ENCODE measurements at regions of chr3 and their contacts with region 1.

Region 1: DNA sequence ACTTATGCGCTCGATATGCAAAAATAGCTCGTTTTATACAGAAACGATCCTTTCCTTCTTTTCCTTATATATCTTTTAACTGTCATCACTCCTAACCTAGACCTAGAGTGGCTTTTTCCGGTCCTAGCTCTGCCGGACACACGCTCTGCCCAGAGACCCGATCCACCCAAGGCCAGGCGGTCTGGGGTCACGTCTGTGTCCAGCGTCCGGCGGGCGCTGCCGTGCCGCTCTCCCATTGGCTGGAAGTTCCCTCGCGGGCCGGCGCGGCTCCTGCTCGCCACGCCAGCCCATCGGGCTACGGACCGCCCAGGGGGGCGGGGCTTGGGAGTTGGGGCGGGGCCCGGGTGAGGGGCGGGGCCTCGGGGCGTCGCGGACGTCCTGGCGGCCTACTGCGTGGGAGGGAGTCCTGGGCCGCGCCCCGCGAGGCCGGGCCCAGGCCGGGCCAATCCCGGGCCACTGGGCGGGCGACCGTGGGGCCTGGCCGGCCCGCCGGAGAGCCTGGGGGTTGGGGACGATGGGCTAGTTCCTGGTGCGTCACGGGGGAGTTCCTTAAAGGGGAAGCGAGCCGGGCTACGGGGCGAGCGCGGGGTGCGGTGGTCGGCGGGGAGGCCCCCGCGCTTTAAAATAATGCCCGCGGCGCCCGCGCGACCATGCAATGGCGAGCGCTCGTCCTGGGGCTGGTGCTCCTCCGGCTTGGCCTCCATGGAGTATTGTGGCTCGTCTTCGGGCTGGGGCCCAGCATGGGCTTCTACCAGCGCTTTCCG is at the start of gene EDEM1:
- DNase-seq: peak; percentile 96
- ATAC-seq: peak; percentile 88
- H3K4me3 ChIP-seq: peak within 1 kb of the TSS; percentile 91 to 99 (median 94)
- H3K4me3 Mint-ChIP-seq: peak within 1 kb of the TSS; percentile 99
- H3K27ac ChIP-seq: peak within 1 kb of the TSS; percentile 94 to 96
- H3K27ac Mint-ChIP-seq: peak within 1 kb of the TSS; percentile 99
- H3K4me1 ChIP-seq: peaks cover 69 to 75% of the 10 kb centered on the region in 2 donors
- H3K4me1 Mint-ChIP-seq: peaks cover 69% of the 10 kb centered on the region
- H3K27me3 ChIP-seq: no peaks in the 10 kb centered on the region
- H3K27me3 Mint-ChIP-seq: no peaks in the 10 kb centered on the region
- CTCF ChIP-seq: no peak
- total RNA-seq, gene EDEM1: 167 and 177 TPM in 2 replicates

Region 2: DNA sequence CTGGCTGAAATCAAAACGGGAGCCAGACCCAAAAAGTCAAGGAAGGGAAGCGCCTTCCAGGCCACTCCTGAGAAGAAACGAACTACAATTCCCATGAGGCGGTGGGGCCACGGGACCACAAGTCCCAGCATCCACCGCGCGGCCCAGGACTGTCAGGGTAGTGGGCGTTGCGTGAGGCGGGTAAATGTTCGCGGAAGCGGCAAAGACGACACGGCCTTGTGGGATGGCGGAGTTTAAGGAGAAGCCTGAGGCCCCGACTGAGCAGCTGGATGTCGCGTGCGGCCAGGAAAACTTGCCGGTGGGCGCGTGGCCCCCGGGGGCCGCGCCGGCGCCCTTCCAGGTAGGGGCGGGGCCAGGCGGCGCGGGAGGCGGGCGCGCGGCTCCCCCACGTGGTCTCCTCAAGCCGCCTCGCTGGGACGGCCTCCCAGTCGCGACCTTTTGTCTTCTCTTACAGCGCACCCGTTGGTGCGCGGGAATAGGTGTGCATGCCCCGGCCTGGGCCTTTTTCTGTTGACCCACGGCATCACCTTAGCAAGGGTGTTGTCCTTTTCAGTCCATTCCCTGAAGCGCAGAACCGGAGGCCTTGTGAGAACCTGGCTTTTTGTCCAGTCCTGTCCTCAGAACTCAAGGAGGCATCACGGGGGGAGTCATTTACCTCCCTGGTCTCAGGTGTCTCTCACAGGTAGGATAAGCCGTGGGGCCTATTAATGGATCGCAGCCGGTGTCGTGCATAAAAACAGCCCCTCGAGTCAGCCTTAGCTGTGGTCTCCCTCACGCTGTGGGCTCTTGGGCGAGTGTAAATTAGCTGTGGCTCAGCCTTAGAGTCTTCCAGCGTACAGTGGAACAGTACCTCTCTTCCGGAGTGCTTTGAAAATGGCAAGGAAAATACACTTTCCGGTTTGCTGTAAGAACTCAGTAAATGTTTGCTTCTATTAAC is 883.9 kb before region 1 on chr3 and contains the start of gene SETMAR:
- CTCF ChIA-PET with region 1: no interaction called
- POLR2A ChIA-PET with region 1: no interaction called
- intact Hi-C with region 1: loop called (anchors 5 kb)
- DNase-seq: peak; percentile 91
- ATAC-seq: peak; percentile 94
- H3K4me3 ChIP-seq: peak within 1 kb of the TSS; percentile 62 to 88 (median 85)
- H3K4me3 Mint-ChIP-seq: peak within 1 kb of the TSS; percentile 100
- H3K27ac ChIP-seq: peak within 1 kb of the TSS; percentile 64 to 79
- H3K27ac Mint-ChIP-seq: peak within 1 kb of the TSS; percentile 99
- H3K4me1 ChIP-seq: peaks cover 0 to 12% of the 10 kb centered on the region in 2 donors
- H3K4me1 Mint-ChIP-seq: peaks cover 16% of the 10 kb centered on the region
- H3K27me3 ChIP-seq: no peaks in the 10 kb centered on the region
- H3K27me3 Mint-ChIP-seq: no peaks in the 10 kb centered on the region
- CTCF ChIP-seq: no peak
- total RNA-seq, gene SETMAR: 6.8 and 7.6 TPM in 2 replicates

Region 3: DNA sequence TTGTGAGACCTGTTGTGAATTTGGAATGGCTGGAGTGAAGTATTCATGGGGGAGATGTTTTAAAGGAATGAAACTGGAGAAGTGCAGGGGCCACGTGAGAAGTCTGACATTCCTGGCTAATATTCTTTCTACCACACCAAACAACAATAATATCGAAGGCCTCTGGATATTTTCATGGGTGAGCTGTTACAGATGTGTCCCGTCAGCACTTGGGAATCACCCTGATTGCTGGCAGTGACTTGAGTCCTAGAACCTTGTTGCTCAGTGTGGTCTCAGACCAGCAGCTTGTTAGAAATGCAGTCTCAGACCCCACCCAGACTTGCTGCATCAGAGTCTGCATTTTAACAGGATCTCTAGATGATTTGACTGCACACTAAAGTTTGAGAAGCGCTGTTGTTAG is 580.4 kb before region 1 on chr3:
- CTCF ChIA-PET with region 1: no interaction called
- POLR2A ChIA-PET with region 1: no interaction called
- intact Hi-C with region 1: no loop called
- DNase-seq: no peak
- ATAC-seq: no peak
- H3K4me3 ChIP-seq: no peak overlapping the region
- H3K4me3 Mint-ChIP-seq: no peak overlapping the region
- H3K27ac ChIP-seq: no peak overlapping the region
- H3K27ac Mint-ChIP-seq: peak overlapping the region; percentile 4
- H3K4me1 ChIP-seq: peaks cover 3 to 5% of the 10 kb centered on the region in 2 donors
- H3K4me1 Mint-ChIP-seq: peaks cover 57% of the 10 kb centered on the region
- H3K27me3 ChIP-seq: no peaks in the 10 kb centered on the region
- H3K27me3 Mint-ChIP-seq: no peaks in the 10 kb centered on the region
- CTCF ChIP-seq: no peak

Region 4: GRCh38 chr3:5019411-5020241 is 167.7 kb before region 1 on chr3:
- CTCF ChIA-PET with region 1: no interaction called
- POLR2A ChIA-PET with region 1: no interaction called
- intact Hi-C with region 1: no loop called
- DNase-seq: no peak
- ATAC-seq: no peak
- H3K4me3 ChIP-seq: no peak overlapping the region
- H3K4me3 Mint-ChIP-seq: peak overlapping the region; percentile 7
- H3K27ac ChIP-seq: no peak overlapping the region
- H3K27ac Mint-ChIP-seq: peak overlapping the region; percentile 18
- H3K4me1 ChIP-seq: peaks cover 32 to 51% of the 10 kb centered on the region in 2 donors
- H3K4me1 Mint-ChIP-seq: peaks cover 59% of the 10 kb centered on the region
- H3K27me3 ChIP-seq: no peaks in the 10 kb centered on the region
- H3K27me3 Mint-ChIP-seq: no peaks in the 10 kb centered on the region
- CTCF ChIP-seq: no peak

Region 5: DNA sequence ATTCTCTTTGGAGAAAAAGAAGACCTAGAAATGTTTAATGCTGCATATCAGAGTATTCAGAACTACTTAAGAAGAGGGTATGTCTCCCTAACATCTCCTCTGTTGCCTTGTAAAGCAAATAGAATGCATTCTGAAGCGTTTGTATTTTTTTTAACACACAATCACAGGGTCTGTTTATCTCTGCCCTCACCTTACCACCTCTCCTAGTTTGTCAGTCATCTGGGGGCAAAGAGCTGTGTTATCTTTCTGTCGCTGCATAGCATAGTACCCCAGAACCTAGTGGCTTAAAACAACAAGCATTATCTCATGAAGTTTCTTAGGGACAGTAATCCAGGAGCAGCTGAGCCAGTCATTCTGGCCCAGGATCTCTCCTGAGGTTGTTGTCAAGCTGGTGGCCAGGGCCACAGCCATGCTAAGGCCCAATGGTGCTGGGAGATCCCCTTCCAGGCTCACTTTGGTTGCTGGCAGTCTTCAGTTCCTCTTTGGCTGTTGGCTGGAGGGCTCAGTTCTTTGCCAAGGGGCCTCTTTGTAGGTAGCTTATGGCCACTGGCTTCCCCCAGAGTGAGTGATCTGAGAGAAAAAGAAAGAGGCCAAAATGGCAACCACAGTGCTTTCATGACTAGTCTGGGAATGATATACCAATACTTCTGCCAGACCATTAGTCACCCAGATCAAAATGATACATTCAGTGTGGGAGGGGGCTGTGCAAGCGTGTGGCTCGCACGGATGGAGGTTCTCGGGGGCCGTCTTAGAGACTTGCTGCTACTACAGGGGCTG is 18.0 kb after region 1 on chr3:
- CTCF ChIA-PET with region 1: interaction called, 7 read pairs
- POLR2A ChIA-PET with region 1: interaction called, 6 read pairs
- intact Hi-C with region 1: loop called (anchors 2 kb)
- DNase-seq: peak; percentile 73
- ATAC-seq: peak; percentile 97
- H3K4me3 ChIP-seq: no peak overlapping the region
- H3K4me3 Mint-ChIP-seq: peak overlapping the region; percentile 71
- H3K27ac ChIP-seq: peak overlapping the region; percentile 3 to 78
- H3K27ac Mint-ChIP-seq: peak overlapping the region; percentile 90
- H3K4me1 ChIP-seq: peaks cover 11 to 14% of the 10 kb centered on the region in 2 donors
- H3K4me1 Mint-ChIP-seq: peaks cover 30% of the 10 kb centered on the region
- H3K27me3 ChIP-seq: no peaks in the 10 kb centered on the region
- H3K27me3 Mint-ChIP-seq: no peaks in the 10 kb centered on the region
- CTCF ChIP-seq: no peak